A549 (cell line): ENCODE measurements at regions of chr16 and their contacts with region 1.

Region 1: GRCh38 chr16:27314161-27314723 is 468 bp downstream of the IL4R start:
- DNase-seq: peak; percentile 54 to 68
- ATAC-seq: peak; percentile 21 to 47
- H3K4me3 ChIP-seq: peak overlapping the region; percentile 99
- H3K27ac ChIP-seq: peak overlapping the region; percentile 96 to 97
- H3K4me1 ChIP-seq: peaks cover 31% of the 10 kb centered on the region
- CTCF ChIP-seq: no peak
- EP300 ChIP-seq: no peak
- POLR2A ChIP-seq: no peak
- RAD21 ChIP-seq: no peak

Region 2: DNA sequence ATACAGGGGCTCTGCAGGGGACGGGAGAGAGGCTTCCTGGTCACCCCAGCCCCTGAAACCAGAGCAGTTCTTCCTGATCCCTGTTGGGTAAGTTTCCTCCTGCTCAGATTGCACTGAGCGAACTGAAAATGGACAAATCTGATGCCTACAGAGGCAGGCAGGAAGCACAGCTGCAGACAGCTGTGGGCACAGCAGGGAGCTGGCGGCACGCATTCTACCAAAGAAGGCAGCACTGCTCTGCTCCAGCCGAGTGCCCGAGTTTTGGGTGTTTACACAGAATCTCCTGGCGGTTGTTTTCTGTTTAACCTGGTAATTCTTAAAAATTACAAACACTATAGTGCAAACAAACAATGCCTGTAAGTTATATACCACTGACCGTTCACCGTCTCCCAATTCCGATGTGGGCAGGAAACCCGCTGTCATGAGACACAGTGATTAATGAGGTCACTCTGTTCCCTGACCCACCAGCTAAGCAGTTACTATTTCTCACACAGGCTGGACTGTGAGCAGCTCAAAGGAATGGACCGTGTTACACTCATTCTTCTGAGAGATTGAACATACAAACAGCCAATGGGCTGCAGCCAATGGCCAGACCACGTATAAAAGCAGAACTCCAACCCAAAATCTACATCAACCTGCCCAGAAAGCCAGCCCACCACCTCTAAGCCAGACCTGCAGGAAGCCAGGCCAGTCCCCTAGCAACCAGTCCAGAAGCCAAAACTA is 71.2 kb before region 1 on chr16:
- CTCF ChIA-PET with region 1: interaction called, 12 read pairs
- POLR2A ChIA-PET with region 1: no interaction called
- DNase-seq: peak; percentile 35 to 78
- ATAC-seq: peak; percentile 71 to 86
- H3K4me3 ChIP-seq: no peak overlapping the region
- H3K27ac ChIP-seq: peak overlapping the region; percentile 9 to 69; a peak in 4 of 6 replicates
- H3K4me1 ChIP-seq: peaks cover 43% of the 10 kb centered on the region
- CTCF ChIP-seq: no peak
- EP300 ChIP-seq: peak in 1 of 2 experiments; percentile 18; a peak in 1 of 5 replicates
- POLR2A ChIP-seq: no peak
- RAD21 ChIP-seq: no peak

Region 3: DNA sequence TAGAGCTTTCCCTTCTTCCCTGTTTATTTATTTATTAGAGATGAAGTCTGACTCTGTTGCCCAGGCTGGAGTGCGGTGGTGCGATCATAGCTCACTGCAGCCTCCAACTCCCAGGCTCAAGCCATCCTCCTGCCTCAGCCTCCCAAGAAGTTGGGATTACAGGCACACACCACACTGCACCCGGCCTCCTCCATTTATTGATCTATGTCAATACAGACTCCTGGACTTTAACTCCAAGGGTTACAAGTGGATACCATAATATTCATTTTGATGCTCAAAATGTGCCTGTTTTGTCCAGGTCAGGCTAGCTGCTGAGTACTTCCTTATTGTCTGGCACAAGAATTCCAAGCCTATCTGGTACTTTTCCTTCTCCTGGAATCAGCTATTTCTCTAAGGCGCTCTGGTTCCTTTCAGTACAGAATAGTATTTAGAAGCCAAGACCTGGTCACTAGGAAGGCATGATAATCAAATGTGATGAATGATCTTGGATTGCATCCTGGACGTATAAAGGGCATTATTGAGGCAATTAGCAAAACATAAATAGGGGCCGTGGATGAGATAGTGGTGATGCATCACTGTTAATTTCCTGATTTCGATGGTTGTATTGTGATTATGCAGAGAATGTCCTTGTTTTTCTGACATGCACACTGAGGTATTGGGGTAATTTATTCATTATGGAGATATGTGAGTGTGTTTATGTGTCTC is 21.3 kb after region 1 on chr16:
- CTCF ChIA-PET with region 1: no interaction called
- POLR2A ChIA-PET with region 1: no interaction called
- DNase-seq: no peak
- ATAC-seq: no peak
- H3K4me3 ChIP-seq: no peak overlapping the region
- H3K27ac ChIP-seq: no peak overlapping the region
- H3K4me1 ChIP-seq: no peaks in the 10 kb centered on the region
- CTCF ChIP-seq: no peak
- EP300 ChIP-seq: no peak
- POLR2A ChIP-seq: no peak
- RAD21 ChIP-seq: no peak

Region 4: DNA sequence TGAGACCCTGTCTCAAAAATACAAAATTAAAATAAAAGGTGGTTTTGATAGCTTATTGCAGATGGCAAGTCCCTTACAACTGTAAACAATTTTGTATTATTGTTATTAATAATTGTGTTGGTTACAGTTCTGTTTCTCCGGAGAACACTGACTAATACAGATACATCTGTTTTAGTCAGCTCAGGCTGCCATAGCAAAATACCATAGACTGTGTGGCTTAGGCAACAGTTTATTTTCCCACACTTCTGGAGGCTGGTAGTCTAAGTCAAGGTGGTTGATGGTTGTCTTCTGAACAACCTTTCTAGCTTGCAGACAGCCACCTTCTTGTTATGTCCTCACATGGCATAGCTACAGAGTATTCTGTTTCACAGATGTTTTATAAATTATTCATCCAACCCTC is 73.5 kb after region 1 on chr16:
- CTCF ChIA-PET with region 1: no interaction called
- POLR2A ChIA-PET with region 1: no interaction called
- DNase-seq: no peak
- ATAC-seq: no peak
- H3K4me3 ChIP-seq: no peak overlapping the region
- H3K27ac ChIP-seq: no peak overlapping the region
- H3K4me1 ChIP-seq: no peaks in the 10 kb centered on the region
- CTCF ChIP-seq: no peak
- EP300 ChIP-seq: no peak
- POLR2A ChIP-seq: no peak
- RAD21 ChIP-seq: no peak